B cell (primary cell): ENCODE measurements at regions of chr19 and their contacts with region 1.

Region 1: DNA sequence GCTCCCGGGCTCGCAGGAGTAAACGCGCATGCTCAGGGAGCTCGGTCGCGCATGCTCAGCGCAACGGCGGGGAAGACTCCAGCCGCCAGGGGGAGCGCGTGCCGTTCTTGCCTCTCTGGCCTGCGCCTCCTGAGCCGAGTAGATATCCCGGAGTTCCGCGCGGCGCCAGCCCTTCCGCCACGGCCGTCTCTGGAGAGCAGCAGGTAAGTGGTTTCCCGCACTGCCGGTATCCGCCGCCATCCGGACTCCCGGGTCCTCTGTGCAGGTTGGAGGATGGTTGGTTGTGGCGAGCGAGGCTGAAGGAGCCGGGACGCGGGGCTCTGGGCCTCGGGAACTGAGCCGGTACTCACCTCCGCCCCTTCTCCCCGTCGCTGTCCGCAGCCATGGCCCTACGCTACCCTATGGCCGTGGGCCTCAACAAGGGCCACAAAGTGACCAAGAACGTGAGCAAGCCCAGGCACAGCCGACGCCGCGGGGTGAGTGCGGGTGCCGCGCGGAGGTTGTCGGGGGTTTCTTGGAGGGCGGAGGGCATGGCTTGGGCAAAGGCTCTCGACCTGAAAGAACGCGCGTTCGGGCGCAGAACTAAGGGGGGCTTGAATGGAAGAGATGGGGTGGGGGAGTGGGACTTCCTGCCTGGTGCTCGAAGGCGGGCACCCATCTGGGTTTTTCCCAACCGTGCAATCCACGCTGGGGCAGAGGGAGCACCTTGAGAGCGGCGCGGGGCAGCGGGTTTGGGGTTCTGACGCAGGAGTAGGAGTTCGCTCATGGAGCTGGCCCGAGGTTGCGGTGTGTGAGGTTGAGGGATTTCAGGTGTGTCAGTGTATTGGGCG is at the start of gene RPL36:
- DNase-seq: peak; percentile 99
- ATAC-seq: peak; percentile 52
- H3K4me3 ChIP-seq: peak within 1 kb of the TSS; percentile 27 to 98 (median 93)
- H3K4me3 Mint-ChIP-seq: peak within 1 kb of the TSS; percentile 94
- H3K27ac ChIP-seq: peak within 1 kb of the TSS; percentile 88 to 89
- H3K27ac Mint-ChIP-seq: peak within 1 kb of the TSS; percentile 93
- H3K4me1 ChIP-seq: peaks cover 14 to 39% of the 10 kb centered on the region in 2 donors
- H3K4me1 Mint-ChIP-seq: peaks cover 43% of the 10 kb centered on the region
- H3K27me3 ChIP-seq: no peaks in the 10 kb centered on the region
- H3K27me3 Mint-ChIP-seq: no peaks in the 10 kb centered on the region
- CTCF ChIP-seq: peak; percentile 94
- total RNA-seq, gene RPL36: 895 and 983 TPM in 2 replicates

Region 2: GRCh38 chr19:4241824-4242430 is 1448.4 kb before region 1 on chr19:
- CTCF ChIA-PET with region 1: no interaction called
- POLR2A ChIA-PET with region 1: interaction called, 11 read pairs
- intact Hi-C with region 1: no loop called
- DNase-seq: no peak
- ATAC-seq: no peak
- H3K4me3 ChIP-seq: no peak overlapping the region
- H3K4me3 Mint-ChIP-seq: peak overlapping the region; percentile 3
- H3K27ac ChIP-seq: no peak overlapping the region
- H3K27ac Mint-ChIP-seq: no peak overlapping the region
- H3K4me1 ChIP-seq: peaks cover 5 to 15% of the 10 kb centered on the region in 2 donors
- H3K4me1 Mint-ChIP-seq: peaks cover 15% of the 10 kb centered on the region
- H3K27me3 ChIP-seq: no peaks in the 10 kb centered on the region
- H3K27me3 Mint-ChIP-seq: no peaks in the 10 kb centered on the region
- CTCF ChIP-seq: no peak

Region 3: GRCh38 chr19:4723367-4724187 is 966.8 kb before region 1 on chr19 and contains the start of gene DPP9:
- CTCF ChIA-PET with region 1: no interaction called
- POLR2A ChIA-PET with region 1: no interaction called
- intact Hi-C with region 1: loop called (anchors 5 kb)
- DNase-seq: peak; percentile 100
- ATAC-seq: peak; percentile 94
- H3K4me3 ChIP-seq: peak within 1 kb of the TSS; percentile 71 to 97 (median 91)
- H3K4me3 Mint-ChIP-seq: peak within 1 kb of the TSS; percentile 97
- H3K27ac ChIP-seq: peak within 1 kb of the TSS; percentile 63 to 89
- H3K27ac Mint-ChIP-seq: peak within 1 kb of the TSS; percentile 98
- H3K4me1 ChIP-seq: peaks cover 20 to 26% of the 10 kb centered on the region in 2 donors
- H3K4me1 Mint-ChIP-seq: peaks cover 45% of the 10 kb centered on the region
- H3K27me3 ChIP-seq: no peaks in the 10 kb centered on the region
- H3K27me3 Mint-ChIP-seq: peaks cover 3% of the 10 kb centered on the region
- CTCF ChIP-seq: no peak
- total RNA-seq, gene DPP9: 109 and 115 TPM in 2 replicates

Region 4: DNA sequence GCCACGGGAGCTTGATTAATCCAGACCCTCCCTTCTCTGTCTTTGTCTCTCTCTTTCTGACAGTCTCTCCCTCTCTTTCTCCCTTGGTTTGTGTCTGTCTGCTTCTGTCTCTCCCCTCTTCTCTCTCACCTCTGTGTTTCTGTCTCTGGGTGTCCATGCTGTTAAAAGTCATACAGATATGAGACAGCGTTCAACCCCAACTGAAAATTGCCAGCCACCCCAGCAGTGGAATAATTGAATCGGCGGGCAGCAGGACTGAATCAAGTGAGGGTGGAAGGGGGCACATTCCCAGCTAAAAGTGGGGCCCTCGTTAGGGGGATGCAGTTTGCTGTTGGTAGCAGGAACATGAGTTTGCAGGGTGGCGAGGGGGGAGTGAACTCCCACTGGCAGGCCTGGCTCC is 166.3 kb before region 1 on chr19:
- CTCF ChIA-PET with region 1: no interaction called
- POLR2A ChIA-PET with region 1: no interaction called
- intact Hi-C with region 1: no loop called
- DNase-seq: no peak
- ATAC-seq: no peak
- H3K4me3 ChIP-seq: no peak overlapping the region
- H3K4me3 Mint-ChIP-seq: no peak overlapping the region
- H3K27ac ChIP-seq: no peak overlapping the region
- H3K27ac Mint-ChIP-seq: no peak overlapping the region
- H3K4me1 ChIP-seq: no peaks in the 10 kb centered on the region
- H3K4me1 Mint-ChIP-seq: no peaks in the 10 kb centered on the region
- H3K27me3 ChIP-seq: no peaks in the 10 kb centered on the region
- H3K27me3 Mint-ChIP-seq: peaks cover 15% of the 10 kb centered on the region
- CTCF ChIP-seq: no peak

Region 5: GRCh38 chr19:5567360-5567969 is 122.9 kb before region 1 on chr19 and contains the start of gene TINCR:
- CTCF ChIA-PET with region 1: no interaction called
- POLR2A ChIA-PET with region 1: no interaction called
- intact Hi-C with region 1: no loop called
- DNase-seq: no peak
- ATAC-seq: no peak
- H3K4me3 ChIP-seq: no peak within 1 kb of the TSS
- H3K4me3 Mint-ChIP-seq: no peak within 1 kb of the TSS
- H3K27ac ChIP-seq: no peak within 1 kb of the TSS
- H3K27ac Mint-ChIP-seq: no peak within 1 kb of the TSS
- H3K4me1 ChIP-seq: peaks cover 0 to 3% of the 10 kb centered on the region in 2 donors
- H3K4me1 Mint-ChIP-seq: no peaks in the 10 kb centered on the region
- H3K27me3 ChIP-seq: peaks cover 0 to 30% (median 17%) of the 10 kb centered on the region in 4 experiments
- H3K27me3 Mint-ChIP-seq: peaks cover 10% of the 10 kb centered on the region
- CTCF ChIP-seq: no peak
- total RNA-seq, gene TINCR: 0.42 and 1.00 TPM in 2 replicates

Region 6: DNA sequence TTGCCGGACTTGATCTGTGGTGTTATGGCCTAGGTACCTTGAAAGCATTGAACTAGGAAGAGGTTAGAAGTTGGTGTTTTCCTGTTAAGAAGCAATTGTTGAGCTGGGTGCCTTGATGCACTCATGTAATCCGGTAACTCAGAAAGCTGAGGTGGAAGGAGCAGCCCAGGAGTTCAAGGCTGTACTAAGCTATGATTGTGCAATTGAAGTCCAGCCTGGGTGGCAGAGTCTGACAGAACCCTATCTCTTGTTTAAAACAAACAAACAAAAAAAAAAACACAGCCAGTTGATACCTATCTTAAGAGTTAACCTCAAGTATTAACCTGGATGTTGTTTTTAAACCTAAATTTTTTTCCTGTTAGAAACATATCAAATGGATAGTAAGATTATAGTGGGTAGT is 48.1 kb before region 1 on chr19:
- CTCF ChIA-PET with region 1: no interaction called
- POLR2A ChIA-PET with region 1: no interaction called
- intact Hi-C with region 1: no loop called
- DNase-seq: no peak
- ATAC-seq: no peak
- H3K4me3 ChIP-seq: no peak overlapping the region
- H3K4me3 Mint-ChIP-seq: no peak overlapping the region
- H3K27ac ChIP-seq: no peak overlapping the region
- H3K27ac Mint-ChIP-seq: no peak overlapping the region
- H3K4me1 ChIP-seq: no peaks in the 10 kb centered on the region
- H3K4me1 Mint-ChIP-seq: peaks cover 20% of the 10 kb centered on the region
- H3K27me3 ChIP-seq: no peaks in the 10 kb centered on the region
- H3K27me3 Mint-ChIP-seq: no peaks in the 10 kb centered on the region
- CTCF ChIP-seq: no peak

Region 7: DNA sequence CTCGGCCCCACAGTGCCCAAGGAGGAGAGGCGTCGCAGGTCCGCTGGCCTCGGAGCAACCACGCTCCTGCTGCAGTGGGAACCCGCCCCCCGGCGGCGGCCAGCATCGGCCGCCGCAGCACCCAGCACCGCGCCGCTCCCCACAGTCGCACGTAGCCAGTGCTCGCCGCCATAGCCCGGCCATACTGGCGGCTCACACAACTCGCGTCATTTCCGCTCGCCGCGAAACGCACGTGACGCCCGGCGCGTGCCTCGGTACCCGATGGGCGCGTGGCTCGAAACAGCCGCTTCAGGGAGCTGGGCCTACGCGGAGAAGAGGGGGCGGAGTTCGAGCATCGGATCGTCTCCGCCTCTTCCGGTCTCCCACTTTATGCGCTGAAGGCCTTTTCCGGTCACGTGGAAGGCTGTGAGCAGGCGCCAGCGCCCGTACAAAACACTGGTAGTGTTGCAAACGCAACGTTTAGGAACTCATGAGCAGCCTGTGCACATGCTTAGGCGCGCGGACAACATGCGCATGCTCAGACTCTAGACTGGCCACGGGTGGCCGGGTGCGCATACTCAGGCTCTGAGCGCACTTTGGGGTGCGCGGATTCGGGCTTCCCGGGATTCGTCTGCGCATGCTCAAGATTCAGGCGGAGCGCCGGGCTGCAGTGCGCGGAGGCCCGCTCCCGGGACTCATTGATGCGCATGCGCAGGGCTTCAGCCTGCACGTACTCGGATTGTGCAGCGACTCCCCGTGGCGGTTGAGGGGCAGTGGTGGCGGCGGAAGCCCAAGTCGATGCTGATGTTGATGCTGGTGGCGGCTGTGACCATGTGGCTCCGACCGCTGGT is 29.8 kb after region 1 on chr19 and contains the starts of genes CATSPERD and LONP1:
- CTCF ChIA-PET with region 1: interaction called, 31 read pairs
- POLR2A ChIA-PET with region 1: interaction called, 10 read pairs
- intact Hi-C with region 1: loop called (anchors 1 kb)
- DNase-seq: peak; percentile 100
- ATAC-seq: peak; percentile 86
- H3K4me3 ChIP-seq: peak within 1 kb of the TSS; percentile 73 to 95 (median 91)
- H3K4me3 Mint-ChIP-seq: peak within 1 kb of the TSS; percentile 95
- H3K27ac ChIP-seq: peak within 1 kb of the TSS; percentile 87 to 98
- H3K27ac Mint-ChIP-seq: peak within 1 kb of the TSS; percentile 99
- H3K4me1 ChIP-seq: peaks cover 12 to 26% of the 10 kb centered on the region in 2 donors
- H3K4me1 Mint-ChIP-seq: peaks cover 27% of the 10 kb centered on the region
- H3K27me3 ChIP-seq: no peaks in the 10 kb centered on the region
- H3K27me3 Mint-ChIP-seq: peaks cover 3% of the 10 kb centered on the region
- CTCF ChIP-seq: peak; percentile 86
- total RNA-seq, gene CATSPERD: not detected in 2 replicates
- total RNA-seq, gene LONP1: 67.2 and 70.3 TPM in 2 replicates

Region 8: GRCh38 chr19:5772416-5772815 is 82.1 kb after region 1 on chr19:
- CTCF ChIA-PET with region 1: interaction called, 3 read pairs
- POLR2A ChIA-PET with region 1: interaction called, 12 read pairs
- intact Hi-C with region 1: no loop called
- DNase-seq: no peak
- ATAC-seq: no peak
- H3K4me3 ChIP-seq: no peak overlapping the region
- H3K4me3 Mint-ChIP-seq: no peak overlapping the region
- H3K27ac ChIP-seq: no peak overlapping the region
- H3K27ac Mint-ChIP-seq: no peak overlapping the region
- H3K4me1 ChIP-seq: no peaks in the 10 kb centered on the region
- H3K4me1 Mint-ChIP-seq: peaks cover 2% of the 10 kb centered on the region
- H3K27me3 ChIP-seq: peaks cover 0 to 2% (median 0%) of the 10 kb centered on the region in 4 experiments
- H3K27me3 Mint-ChIP-seq: no peaks in the 10 kb centered on the region
- CTCF ChIP-seq: no peak

Region 9: GRCh38 chr19:5790573-5791520 is 100.5 kb after region 1 on chr19 and contains the start of gene DUS3L:
- CTCF ChIA-PET with region 1: interaction called, 3 read pairs
- POLR2A ChIA-PET with region 1: no interaction called
- intact Hi-C with region 1: loop called (anchors 1 kb)
- DNase-seq: peak; percentile 97
- ATAC-seq: peak; percentile 92
- H3K4me3 ChIP-seq: peak within 1 kb of the TSS; percentile 67 to 91 (median 87)
- H3K4me3 Mint-ChIP-seq: peak within 1 kb of the TSS; percentile 98
- H3K27ac ChIP-seq: peak within 1 kb of the TSS; percentile 97 to 98
- H3K27ac Mint-ChIP-seq: peak within 1 kb of the TSS; percentile 100
- H3K4me1 ChIP-seq: peaks cover 5 to 16% of the 10 kb centered on the region in 2 donors
- H3K4me1 Mint-ChIP-seq: peaks cover 10% of the 10 kb centered on the region
- H3K27me3 ChIP-seq: peaks cover 0 to 6% (median 0%) of the 10 kb centered on the region in 4 experiments
- H3K27me3 Mint-ChIP-seq: no peaks in the 10 kb centered on the region
- CTCF ChIP-seq: no peak
- total RNA-seq, gene DUS3L: 79.0 and 84.6 TPM in 2 replicates

Region 10: DNA sequence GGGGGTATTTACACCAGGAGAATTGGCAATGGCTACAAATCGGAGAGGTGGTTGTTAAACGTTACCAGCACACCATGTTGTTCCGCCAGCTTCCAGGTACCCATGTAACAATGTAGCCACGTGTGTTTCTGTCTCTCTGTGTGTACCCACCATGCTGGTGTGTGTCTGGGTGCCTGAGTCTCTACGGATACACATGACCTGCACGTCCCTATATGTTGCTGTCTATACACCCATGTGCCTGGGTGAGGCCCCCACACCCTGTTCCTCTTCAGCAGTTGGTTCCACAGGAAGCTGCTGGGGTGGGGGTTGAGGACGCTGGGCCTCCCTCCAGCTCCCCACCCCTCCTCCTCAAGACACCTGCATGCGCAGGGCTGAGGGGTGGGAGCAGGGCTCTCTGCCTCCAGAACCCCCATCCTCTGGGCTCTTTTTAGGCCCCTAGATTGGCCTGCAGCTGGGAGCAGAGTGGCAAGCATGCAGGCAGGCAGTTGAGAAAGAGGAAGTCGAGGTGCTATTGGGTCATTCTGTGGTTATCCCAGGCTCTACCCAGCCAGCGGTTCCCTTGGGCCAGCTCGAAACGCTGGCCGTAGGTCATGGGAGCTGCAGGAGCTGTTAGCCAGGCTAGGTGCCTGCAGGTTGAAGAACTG is 1658.4 kb after region 1 on chr19 and contains the start of gene ARHGEF18:
- CTCF ChIA-PET with region 1: no interaction called
- POLR2A ChIA-PET with region 1: no interaction called
- intact Hi-C with region 1: loop called (anchors 5 kb)
- DNase-seq: peak; percentile 89
- ATAC-seq: peak; percentile 41
- H3K4me3 ChIP-seq: peak within 1 kb of the TSS; percentile 66 to 100 (median 97)
- H3K4me3 Mint-ChIP-seq: peak within 1 kb of the TSS; percentile 99
- H3K27ac ChIP-seq: peak within 1 kb of the TSS; percentile 96 to 99
- H3K27ac Mint-ChIP-seq: peak within 1 kb of the TSS; percentile 97
- H3K4me1 ChIP-seq: peaks cover 61 to 80% of the 10 kb centered on the region in 2 donors
- H3K4me1 Mint-ChIP-seq: peaks cover 79% of the 10 kb centered on the region
- H3K27me3 ChIP-seq: no peaks in the 10 kb centered on the region
- H3K27me3 Mint-ChIP-seq: no peaks in the 10 kb centered on the region
- CTCF ChIP-seq: no peak
- total RNA-seq, gene ARHGEF18: 86.8 and 94.9 TPM in 2 replicates